ENCODE measurements at regions of chr3 and their contacts with region 1.

Region 1: DNA sequence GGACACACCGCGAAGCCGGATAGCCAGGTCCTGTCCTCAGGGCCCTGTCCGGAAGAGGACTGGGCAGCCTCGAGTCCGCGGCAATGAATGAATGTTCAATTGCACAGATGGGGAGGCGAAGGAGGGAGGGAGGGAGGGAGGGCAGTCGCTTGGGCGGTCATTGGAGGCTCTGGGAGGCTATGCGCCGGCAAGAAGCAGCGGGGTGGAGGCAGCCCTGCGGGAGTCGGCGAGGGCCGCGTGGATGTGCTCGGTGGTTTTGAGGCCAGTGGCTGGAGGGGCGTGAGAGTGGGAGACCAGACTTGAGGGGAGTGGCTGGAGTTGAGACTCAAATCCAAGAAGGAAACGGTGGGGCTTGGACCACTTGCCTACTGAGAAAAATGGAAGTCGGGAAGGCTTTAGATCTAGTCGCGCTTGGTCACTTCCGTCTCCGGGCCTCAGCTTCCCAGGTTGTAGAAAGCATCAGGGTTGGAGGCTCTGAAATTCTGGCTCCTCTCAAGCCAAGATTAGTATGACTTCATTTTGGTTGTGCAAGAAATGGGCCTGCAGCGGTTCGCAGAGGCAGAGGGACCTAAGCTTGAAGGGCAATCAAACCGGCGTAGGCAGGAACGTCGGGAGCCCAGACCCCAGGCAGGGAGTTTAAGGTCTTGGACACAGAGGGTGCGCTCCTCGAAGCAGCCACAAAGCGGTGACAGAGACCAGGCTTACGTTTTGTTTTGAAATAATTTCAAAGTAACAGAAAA is 21.1 kb upstream of the PLXND1 start:
- DNase-seq: peak; percentile 75 to 83 (median 81)
- ATAC-seq: peak; percentile 25 to 58 (median 52)
- H3K4me3 ChIP-seq: peak overlapping the region; percentile 45 to 75 (median 62)
- H3K27ac ChIP-seq: peak overlapping the region; percentile 91 to 100 (median 98)
- H3K4me1 ChIP-seq: peaks cover 17 to 64% (median 50%) of the 10 kb centered on the region in 12 donors
- H3K27me3 ChIP-seq: no peaks in the 10 kb centered on the region
- CTCF ChIP-seq: peak; percentile 64 to 93 (median 84)
- POLR2A ChIP-seq: no peak

Region 2: DNA sequence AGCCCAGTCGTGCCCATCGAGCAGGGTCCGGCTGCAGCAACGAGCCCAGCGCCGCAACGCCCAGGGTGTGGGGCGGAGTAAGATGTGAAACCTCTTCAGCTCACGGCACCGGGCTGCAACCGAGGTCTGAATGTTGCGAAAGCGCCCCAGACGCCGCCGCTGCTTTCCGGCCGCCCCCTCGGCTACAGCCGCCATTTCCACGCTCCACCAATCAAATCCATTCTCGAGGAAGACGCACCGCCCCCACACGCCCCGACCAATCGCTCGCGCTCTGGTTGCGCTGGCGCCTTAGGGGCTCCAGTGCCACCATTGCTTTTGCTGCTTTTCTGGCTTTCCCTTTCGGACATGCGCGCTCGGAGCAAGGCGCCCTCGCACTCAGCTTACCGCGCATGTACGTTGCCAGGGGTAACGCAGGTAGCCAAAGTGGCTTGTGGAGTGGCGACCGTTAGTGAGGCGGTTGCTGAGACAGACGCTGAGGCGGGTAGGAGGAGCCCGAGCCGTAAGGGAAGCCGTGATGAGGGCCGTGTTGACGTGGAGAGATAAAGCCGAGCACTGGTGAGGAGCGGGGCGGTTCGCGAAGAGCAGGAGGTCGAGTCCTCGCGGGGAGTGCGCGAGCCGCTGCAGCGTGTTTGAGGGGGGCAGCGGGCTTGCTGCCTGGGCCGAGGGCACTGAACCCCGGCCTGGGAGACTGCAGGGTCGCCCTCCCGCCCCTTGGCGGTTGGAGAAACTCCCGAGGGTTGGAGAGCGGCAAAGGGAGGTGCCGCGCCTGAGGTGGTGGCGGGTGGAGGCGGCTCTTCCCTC is 187.6 kb before region 1 on chr3 and contains the starts of genes IFT122 and MBD4:
- intact Hi-C with region 1: loop called in 1 of 10 experiments (anchors 2 kb)
- DNase-seq: peak; percentile 96 to 98 (median 97)
- ATAC-seq: peak; percentile 94 to 97 (median 96)
- H3K4me3 ChIP-seq: peak within 1 kb of the TSS; percentile 52 to 89 (median 81)
- H3K27ac ChIP-seq: peak within 1 kb of the TSS; percentile 86 to 98 (median 90)
- H3K4me1 ChIP-seq: peaks cover 5 to 85% (median 46%) of the 10 kb centered on the region in 12 donors
- H3K27me3 ChIP-seq: no peaks in the 10 kb centered on the region
- CTCF ChIP-seq: peak in 1 of 12 donors; percentile 2
- POLR2A ChIP-seq: peak in 1 of 2 donors; percentile 86
- total RNA-seq, gene IFT122: 13.1 to 34.2 (median 16.6) TPM
- total RNA-seq, gene MBD4: 13.0 to 26.7 (median 20.6) TPM

Region 3: DNA sequence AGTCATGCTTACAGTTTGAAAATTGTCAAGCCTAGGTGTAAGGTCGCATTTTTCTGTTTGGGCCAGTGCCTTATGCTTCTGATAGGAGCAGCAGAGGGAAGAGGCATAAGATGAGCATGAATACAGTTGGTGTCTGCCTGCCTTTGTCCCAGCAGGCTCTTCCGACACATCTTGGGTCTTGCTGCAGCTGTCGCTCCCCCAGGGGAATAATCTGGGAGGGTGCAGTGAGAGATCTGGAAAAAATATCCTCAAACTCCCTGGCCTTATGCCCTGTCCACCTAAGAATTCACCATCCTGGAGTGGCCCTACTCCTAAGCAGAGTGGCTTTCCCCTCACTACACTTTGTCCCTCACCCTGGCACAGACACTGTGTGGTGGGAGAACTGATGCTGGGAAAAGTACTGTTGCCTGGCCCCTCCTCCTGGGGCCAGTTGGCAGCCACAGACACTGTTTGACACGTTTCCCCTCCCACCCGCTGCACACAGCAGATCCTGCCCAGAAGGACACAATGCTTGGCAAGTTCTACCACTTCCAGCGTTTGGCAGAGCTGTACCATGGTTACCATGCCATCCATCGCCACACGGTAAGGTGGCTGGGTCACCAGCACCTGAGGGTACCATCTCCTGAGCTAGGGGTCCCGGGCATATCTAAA is 120.3 kb before region 1 on chr3:
- intact Hi-C with region 1: loop called in 1 of 10 experiments (anchors 10 kb)
- DNase-seq: peak; percentile 50 to 72 (median 62)
- ATAC-seq: peak; percentile 76 to 82 (median 78)
- H3K4me3 ChIP-seq: no peak overlapping the region
- H3K27ac ChIP-seq: peak overlapping the region in 6 of 12 donors; percentile 11 to 34 (median 15)
- H3K4me1 ChIP-seq: peaks cover 0 to 69% (median 31%) of the 10 kb centered on the region in 12 donors
- H3K27me3 ChIP-seq: no peaks in the 10 kb centered on the region
- CTCF ChIP-seq: no peak
- POLR2A ChIP-seq: no peak

Region 4: DNA sequence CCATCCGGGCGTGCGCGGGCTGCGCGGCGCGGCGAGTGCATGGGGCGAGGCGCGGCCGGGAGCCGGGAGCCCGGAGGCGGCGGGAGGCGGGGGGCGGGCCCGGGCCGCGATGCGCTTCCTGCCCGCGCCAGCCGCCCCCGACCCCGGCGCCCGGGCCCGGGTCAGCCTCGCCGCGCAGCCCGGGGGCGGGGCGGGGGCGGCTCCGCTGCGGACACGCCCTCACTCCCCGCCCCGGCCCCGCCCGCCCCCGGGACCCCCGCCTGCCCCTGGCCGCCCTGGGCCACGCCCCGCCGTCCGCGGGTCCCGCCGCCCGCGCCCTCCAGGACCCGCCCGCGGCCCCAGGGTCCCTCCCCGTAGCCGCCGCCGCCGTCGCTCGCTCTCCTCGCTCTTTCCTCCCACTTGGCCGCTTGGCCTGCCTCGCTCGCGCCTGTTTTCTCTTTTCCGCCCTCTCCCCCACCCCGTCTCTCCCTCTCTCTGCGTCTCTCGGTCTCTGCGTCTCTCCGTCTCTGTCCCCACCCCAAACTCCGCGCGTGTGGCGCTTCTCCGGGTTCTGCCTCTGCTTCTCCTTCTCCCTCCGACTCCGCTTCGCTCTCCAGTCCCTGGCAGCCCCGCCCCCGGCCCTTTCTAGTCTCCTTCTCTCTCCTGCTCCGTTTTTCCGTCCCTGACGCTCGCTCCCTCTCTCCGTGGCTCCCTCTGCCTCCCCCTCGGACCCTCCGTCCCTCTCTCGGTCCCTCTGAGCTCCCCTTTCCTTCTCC is 20.8 kb before region 1 on chr3 and contains the start of gene PLXND1:
- intact Hi-C with region 1: loop called in 1 of 10 experiments (anchors 1 kb)
- DNase-seq: peak; percentile 84 to 92 (median 86)
- ATAC-seq: peak; percentile 35 to 75 (median 68)
- H3K4me3 ChIP-seq: peak within 1 kb of the TSS; percentile 61 to 99 (median 82)
- H3K27ac ChIP-seq: peak within 1 kb of the TSS; percentile 88 to 98 (median 96)
- H3K4me1 ChIP-seq: peaks cover 21 to 86% (median 60%) of the 10 kb centered on the region in 12 donors
- H3K27me3 ChIP-seq: peaks cover 0 to 12% (median 3%) of the 10 kb centered on the region in 9 donors
- CTCF ChIP-seq: no peak
- POLR2A ChIP-seq: peak in 1 of 2 donors; percentile 60
- total RNA-seq, gene PLXND1: 40.8 to 218 (median 64.9) TPM

Region 5: DNA sequence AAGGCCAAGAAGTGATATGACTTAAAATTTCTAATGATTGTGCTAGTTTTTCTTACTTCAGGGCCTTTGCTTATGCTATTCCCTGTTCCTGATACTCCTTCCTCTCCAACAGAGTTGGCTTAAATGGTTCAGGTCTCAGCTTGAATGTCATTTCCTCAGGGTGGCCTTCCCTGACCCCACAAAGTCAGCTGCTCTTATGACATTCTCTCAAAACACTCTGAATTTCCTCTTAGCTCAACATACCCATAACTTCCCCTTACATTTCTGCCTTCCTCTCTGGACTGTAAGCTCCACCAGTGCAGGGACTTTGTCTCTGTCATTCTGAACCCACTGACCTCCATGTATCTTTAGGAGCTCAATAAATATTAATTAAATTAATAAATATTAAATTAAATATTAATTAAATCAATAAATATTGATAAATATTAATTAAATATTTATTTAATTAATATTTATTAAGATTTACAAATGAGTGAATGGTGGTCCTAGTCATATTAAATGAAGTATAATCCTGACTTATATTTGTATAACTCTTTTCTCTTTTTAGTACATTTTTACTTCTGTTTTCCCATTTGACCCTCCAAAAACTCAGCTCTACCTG is 283.8 kb after region 1 on chr3:
- intact Hi-C with region 1: no loop called
- DNase-seq: no peak
- ATAC-seq: peak in 3 of 4 donors; percentile 38 to 81 (median 78)
- H3K4me3 ChIP-seq: no peak overlapping the region
- H3K27ac ChIP-seq: peak overlapping the region in 1 of 12 donors; percentile 83
- H3K4me1 ChIP-seq: peaks cover 0 to 10% (median 0%) of the 10 kb centered on the region in 12 donors
- H3K27me3 ChIP-seq: no peaks in the 10 kb centered on the region
- CTCF ChIP-seq: no peak
- POLR2A ChIP-seq: no peak

Region 6: DNA sequence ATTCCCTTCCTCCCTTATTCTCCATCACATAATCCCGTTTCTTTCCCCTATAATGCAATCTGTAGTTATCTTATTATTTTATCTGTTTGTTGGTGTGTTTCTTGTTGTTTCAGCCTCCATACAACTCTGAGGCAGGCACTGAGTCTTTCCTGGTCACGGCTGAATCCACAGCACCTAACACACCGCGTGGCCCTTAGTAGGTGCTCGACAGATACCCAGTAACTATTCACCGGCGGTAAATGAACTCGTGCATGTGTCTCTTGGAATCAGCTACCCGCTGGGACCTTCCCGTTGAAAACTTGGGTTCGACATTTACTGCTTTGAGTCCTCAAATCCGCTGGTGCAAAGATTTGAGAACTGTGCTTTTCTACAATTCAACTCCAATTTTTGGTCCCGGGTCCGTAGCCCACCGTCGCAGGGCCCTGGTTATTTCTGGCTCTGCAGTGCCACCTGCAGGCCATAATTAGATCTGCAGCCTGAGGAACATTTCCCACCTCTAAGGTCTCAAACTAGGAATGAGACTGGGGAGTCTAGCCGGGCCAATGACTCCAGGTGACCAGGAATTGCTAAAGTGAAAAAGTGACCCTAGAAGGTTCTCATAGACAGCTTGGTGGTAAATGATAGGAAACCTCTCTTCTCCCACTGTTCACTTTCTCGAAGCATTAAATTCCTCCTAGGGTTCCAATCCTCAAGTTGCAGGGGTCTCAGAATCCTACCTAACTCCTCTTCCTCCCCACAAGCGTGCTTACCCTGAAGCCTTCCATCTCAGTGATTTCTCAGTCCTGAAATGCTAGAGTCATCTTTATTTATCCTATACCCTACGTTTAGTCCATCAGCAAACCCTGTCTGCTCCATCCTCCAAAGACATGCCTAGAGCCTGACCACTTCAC is 306.9 kb after region 1 on chr3:
- intact Hi-C with region 1: loop called (anchors 1 to 5 kb)
- DNase-seq: peak in 1 of 5 donors; percentile 24
- ATAC-seq: peak in 3 of 4 donors; percentile 47 to 62 (median 58)
- H3K4me3 ChIP-seq: peak overlapping the region in 7 of 12 donors; percentile 11 to 41 (median 26)
- H3K27ac ChIP-seq: no peak overlapping the region
- H3K4me1 ChIP-seq: peaks cover 0 to 9% (median 0%) of the 10 kb centered on the region in 12 donors
- H3K27me3 ChIP-seq: no peaks in the 10 kb centered on the region
- CTCF ChIP-seq: peak; percentile 86 to 96 (median 92)
- POLR2A ChIP-seq: no peak

Measured in heart left ventricle (tissue), 16 donors.